ENCODE measurements at regions of chr20 and their contacts with region 1.

Region 1: DNA sequence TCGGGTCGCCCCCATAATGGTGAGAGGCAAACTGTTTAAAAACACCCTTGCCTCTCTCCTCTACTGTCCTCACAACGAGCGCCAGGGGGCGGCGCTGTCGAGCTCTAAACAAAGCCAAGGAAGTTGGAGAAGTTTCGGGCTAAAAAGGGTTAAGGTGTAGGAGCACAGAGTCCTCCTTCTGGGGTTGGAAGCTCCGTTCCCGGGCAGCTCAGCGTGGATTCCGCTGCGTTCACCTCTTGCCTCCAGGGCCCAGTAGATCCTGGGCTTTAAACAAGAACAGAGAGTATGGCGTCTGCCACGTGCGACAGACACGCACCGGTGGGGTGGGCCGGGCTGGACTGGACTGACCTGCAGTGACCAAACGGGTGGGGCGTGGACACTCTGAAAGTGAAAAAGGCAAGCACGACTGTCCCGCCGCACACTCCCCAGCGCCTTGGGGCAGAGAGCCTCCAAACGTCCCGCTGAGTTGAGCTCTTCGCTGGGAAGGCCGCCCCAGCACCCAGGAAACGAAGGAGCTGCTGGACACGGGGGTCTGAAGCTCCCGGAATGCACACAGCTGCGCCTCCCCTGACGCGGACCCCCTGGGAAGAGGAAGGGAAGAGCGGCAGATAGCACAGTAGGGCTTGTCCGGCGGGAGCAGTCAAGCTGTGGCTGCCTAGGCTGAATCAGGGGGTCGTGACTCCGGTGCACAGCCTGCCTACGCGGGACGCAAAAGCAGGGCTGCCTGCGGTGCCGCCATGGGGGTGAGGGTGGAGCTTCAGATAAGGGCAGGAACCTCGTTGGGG is 1.6 kb upstream of the THBD start:
- DNase-seq: peak; percentile 61 to 92 (median 67)
- ATAC-seq: peak; percentile 91
- H3K4me3 ChIP-seq: peak overlapping the region; percentile 35
- H3K27ac ChIP-seq: peak overlapping the region; percentile 84
- H3K4me1 ChIP-seq: peaks cover 15 to 51% of the 10 kb centered on the region in 2 experiments; a peak in 4 of 5 replicates
- H3K27me3 ChIP-seq: no peaks in the 10 kb centered on the region
- CTCF ChIP-seq: peak; percentile 80 to 83 (median 80)
- EP300 ChIP-seq: no peak
- POLR2A ChIP-seq: peak; percentile 72
- RAD21 ChIP-seq: peak; percentile 72 to 89

Region 2: GRCh38 chr20:23061734-23062561 is 10.9 kb after region 1 on chr20:
- CTCF ChIA-PET with region 1: no interaction called
- POLR2A ChIA-PET with region 1: interaction called, 11 read pairs
- in situ Hi-C with region 1: no loop called
- intact Hi-C with region 1: no loop called
- DNase-seq: peak in 1 of 4 experiments; percentile 65
- ATAC-seq: peak; percentile 85
- H3K4me3 ChIP-seq: no peak overlapping the region
- H3K27ac ChIP-seq: no peak overlapping the region
- H3K4me1 ChIP-seq: peaks cover 0 to 24% of the 10 kb centered on the region in 2 experiments; a peak in 2 of 5 replicates
- H3K27me3 ChIP-seq: no peaks in the 10 kb centered on the region
- CTCF ChIP-seq: peak; percentile 49 to 61 (median 59)
- EP300 ChIP-seq: no peak
- POLR2A ChIP-seq: no peak
- RAD21 ChIP-seq: peak; percentile 39 to 44; a peak in 3 of 4 replicates

Region 3: DNA sequence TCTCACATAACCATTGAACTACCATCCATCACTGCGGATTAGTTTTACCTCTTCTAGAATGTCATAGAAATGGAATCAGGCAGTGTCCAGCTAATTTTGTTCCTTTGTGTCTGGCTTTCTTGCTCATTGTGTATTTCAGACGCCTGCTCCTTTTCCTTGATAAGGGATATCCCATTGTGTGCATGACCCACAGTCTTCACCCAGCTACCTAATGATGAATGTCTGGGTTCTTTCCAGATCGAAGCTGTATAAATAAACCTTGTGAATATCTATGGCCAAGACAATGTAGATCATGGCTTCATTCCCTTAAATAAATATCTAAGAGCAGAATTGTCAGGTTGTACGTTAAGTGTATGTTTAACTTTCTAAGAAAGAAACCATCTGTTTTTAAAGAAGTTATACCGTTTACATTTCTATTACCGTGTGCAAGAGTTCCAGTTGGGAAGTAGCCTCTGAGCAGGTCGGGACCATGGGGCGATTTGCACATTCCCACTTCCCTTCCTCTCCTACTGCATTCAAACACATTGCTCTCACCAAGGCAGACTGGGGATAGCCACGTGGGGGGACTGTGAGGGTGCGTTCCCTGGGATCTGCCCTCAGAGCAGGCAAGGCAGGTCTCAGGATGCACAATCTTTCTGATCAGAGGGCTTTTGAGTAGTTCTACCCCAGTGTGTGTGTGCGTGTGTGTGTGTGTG is 22.0 kb after region 1 on chr20:
- CTCF ChIA-PET with region 1: no interaction called
- POLR2A ChIA-PET with region 1: no interaction called
- in situ Hi-C with region 1: no loop called
- intact Hi-C with region 1: no loop called
- DNase-seq: no peak
- ATAC-seq: no peak
- H3K4me3 ChIP-seq: no peak overlapping the region
- H3K27ac ChIP-seq: no peak overlapping the region
- H3K4me1 ChIP-seq: no peaks in the 10 kb centered on the region; a peak in 1 of 5 replicates
- H3K27me3 ChIP-seq: no peaks in the 10 kb centered on the region
- CTCF ChIP-seq: no peak
- EP300 ChIP-seq: no peak
- POLR2A ChIP-seq: no peak
- RAD21 ChIP-seq: no peak

Region 4: DNA sequence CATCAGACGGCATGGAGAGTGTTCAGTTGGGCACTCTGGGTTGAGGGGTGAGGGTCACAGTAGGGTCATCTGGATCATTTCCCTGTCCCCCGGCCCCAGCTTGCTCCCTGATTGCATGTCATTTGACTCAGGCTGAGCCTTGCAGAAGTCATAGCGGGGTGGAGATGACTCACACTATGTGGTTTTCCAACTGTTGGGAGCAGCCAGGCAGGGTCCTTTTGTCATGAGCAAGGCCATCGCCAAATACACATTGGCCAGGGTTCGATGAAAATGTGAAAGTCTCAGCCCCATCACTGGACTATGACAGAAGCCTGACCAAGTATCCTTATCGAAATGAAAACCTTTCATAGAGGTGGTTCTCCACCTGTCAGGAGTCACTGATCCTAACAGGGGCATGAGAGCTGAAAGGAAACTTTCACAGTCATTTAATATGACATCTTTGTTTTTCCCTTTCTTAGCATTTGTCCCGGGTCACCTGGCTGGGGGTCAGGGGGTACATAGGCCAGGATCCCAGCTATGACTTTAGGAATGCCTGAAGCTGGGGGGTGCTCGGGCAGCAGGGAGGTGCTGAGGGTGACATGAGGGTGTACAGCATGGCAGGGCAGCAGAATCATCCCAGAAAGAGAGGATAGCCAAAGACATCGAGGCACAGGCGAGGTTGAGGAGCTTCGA is 105.3 kb after region 1 on chr20:
- CTCF ChIA-PET with region 1: no interaction called
- POLR2A ChIA-PET with region 1: interaction called, 3 read pairs
- in situ Hi-C with region 1: no loop called
- intact Hi-C with region 1: loop called (anchors 5 kb)
- DNase-seq: peak in 3 of 4 experiments; percentile 15 to 85 (median 62)
- ATAC-seq: peak; percentile 60
- H3K4me3 ChIP-seq: no peak overlapping the region
- H3K27ac ChIP-seq: peak overlapping the region; percentile 81
- H3K4me1 ChIP-seq: peaks cover 51 to 92% of the 10 kb centered on the region in 2 experiments
- H3K27me3 ChIP-seq: no peaks in the 10 kb centered on the region
- CTCF ChIP-seq: no peak
- EP300 ChIP-seq: peak; percentile 79
- POLR2A ChIP-seq: 0 out of 2 replicates have a peak, but pooled peaks have one; percentile 11
- RAD21 ChIP-seq: no peak

Region 5: DNA sequence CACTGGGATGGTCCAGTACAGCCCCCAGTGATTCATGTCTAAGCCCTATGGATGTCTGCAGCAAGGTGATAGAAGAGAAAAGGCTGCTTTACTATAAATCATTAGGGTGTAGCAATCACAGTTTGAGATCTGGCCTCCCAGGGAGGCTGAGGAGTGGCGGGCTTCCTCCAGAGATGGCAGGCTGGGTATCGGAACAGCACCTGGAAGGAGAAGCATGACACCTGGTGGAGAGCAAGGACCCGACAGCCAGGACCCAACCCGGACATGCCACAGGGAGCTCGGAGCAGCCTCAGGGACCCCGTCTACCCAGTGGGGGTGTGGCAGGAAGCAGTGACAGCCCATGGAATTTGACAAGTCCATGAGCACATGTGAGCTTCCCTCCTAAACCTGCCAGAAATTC is 149.9 kb after region 1 on chr20:
- CTCF ChIA-PET with region 1: interaction called, 5 read pairs
- POLR2A ChIA-PET with region 1: no interaction called
- in situ Hi-C with region 1: no loop called
- intact Hi-C with region 1: loop called (anchors 5 kb)
- DNase-seq: peak; percentile 60 to 66 (median 62)
- ATAC-seq: peak; percentile 94
- H3K4me3 ChIP-seq: no peak overlapping the region
- H3K27ac ChIP-seq: no peak overlapping the region
- H3K4me1 ChIP-seq: peaks cover 9 to 17% of the 10 kb centered on the region in 2 experiments; a peak in 4 of 5 replicates
- H3K27me3 ChIP-seq: no peaks in the 10 kb centered on the region
- CTCF ChIP-seq: peak; percentile 60 to 80 (median 68)
- EP300 ChIP-seq: 0 out of 2 replicates have a peak, but pooled peaks have one; percentile 24
- POLR2A ChIP-seq: no peak
- RAD21 ChIP-seq: peak; percentile 60 to 85

Region 6: GRCh38 chr20:23235173-23236027 is 184.4 kb after region 1 on chr20:
- CTCF ChIA-PET with region 1: interaction called, 6 read pairs
- POLR2A ChIA-PET with region 1: interaction called, 9 read pairs
- in situ Hi-C with region 1: no loop called
- intact Hi-C with region 1: loop called (anchors 2 kb)
- DNase-seq: peak; percentile 61 to 75 (median 64)
- ATAC-seq: peak; percentile 99
- H3K4me3 ChIP-seq: no peak overlapping the region
- H3K27ac ChIP-seq: no peak overlapping the region
- H3K4me1 ChIP-seq: peaks cover 0 to 3% of the 10 kb centered on the region in 2 experiments; a peak in 1 of 5 replicates
- H3K27me3 ChIP-seq: no peaks in the 10 kb centered on the region
- CTCF ChIP-seq: peak; percentile 77 to 86 (median 78)
- EP300 ChIP-seq: no peak
- POLR2A ChIP-seq: no peak
- RAD21 ChIP-seq: peak; percentile 66 to 89

Region 7: DNA sequence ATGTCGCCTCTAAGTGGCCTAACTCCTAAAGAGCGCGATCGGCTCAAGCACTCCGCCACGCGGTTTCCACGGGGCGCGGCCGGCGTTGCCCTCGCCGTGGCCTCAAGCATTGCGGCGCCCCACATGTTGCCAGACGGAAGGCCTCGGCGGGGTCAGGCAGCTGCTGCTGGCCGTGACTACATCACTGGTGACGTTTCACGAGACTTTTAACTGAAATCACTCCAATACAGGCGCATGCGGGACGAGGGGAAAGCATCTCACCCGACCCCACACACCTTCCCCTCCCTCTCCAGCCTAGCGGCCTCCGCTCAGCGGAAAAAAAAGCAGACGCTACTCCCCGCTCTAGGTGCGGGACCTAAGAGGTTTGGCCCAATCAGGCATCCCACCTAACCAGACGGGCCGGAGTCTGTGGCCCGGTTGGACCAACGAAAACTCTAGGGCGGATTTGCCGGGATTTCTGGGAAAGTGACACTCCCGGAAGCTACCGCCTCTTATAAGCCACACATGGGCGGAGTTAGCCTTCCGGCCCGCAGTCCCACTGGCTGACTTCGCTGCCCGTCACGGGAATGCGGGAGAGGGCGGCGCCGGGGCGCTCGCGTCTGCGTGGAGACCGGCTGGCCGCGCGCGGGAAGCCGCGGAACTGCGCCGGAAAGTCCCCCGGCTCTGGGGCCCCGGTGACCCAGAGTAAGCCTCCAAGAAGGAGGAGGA is 299.3 kb after region 1 on chr20 and contains the start of gene NXT1:
- CTCF ChIA-PET with region 1: no interaction called
- POLR2A ChIA-PET with region 1: interaction called, 3 read pairs
- in situ Hi-C with region 1: loop called (anchors 10 kb)
- intact Hi-C with region 1: loop called (anchors 10 kb)
- DNase-seq: peak; percentile 79 to 95 (median 86)
- ATAC-seq: peak; percentile 97
- H3K4me3 ChIP-seq: peak within 1 kb of the TSS; percentile 95
- H3K27ac ChIP-seq: peak within 1 kb of the TSS; percentile 95
- H3K4me1 ChIP-seq: peaks cover 9 to 12% of the 10 kb centered on the region in 2 experiments; a peak in 4 of 5 replicates
- H3K27me3 ChIP-seq: no peaks in the 10 kb centered on the region
- CTCF ChIP-seq: peak in 2 of 3 experiments; percentile 5; a peak in 2 of 6 replicates
- EP300 ChIP-seq: no peak
- POLR2A ChIP-seq: peak; percentile 82
- RAD21 ChIP-seq: no peak
- polyA plus RNA-seq, gene NXT1: 7.7 to 8.9 TPM

Measured in K562 (cell line).